WTC11 (cell line): ENCODE measurements at regions of chr22 and their contacts with region 1.

Region 1: GRCh38 chr22:24423519-24424000 is 3.8 kb upstream of the ADORA2A start:
- DNase-seq: peak; percentile 69
- ATAC-seq: peak; percentile 29
- H3K4me3 Mint-ChIP-seq: peak overlapping the region; percentile 61
- H3K27ac Mint-ChIP-seq: no peak overlapping the region
- H3K4me1 Mint-ChIP-seq: peaks cover 27% of the 10 kb centered on the region
- H3K27me3 Mint-ChIP-seq: peaks cover 20% of the 10 kb centered on the region
- CTCF ChIP-seq: peak; percentile 98

Region 2: GRCh38 chr22:24433813-24434470 is 10.4 kb after region 1 on chr22:
- CTCF ChIA-PET with region 1: interaction called, 51 read pairs
- POLR2A ChIA-PET with region 1: no interaction called
- DNase-seq: no peak
- ATAC-seq: no peak
- H3K4me3 Mint-ChIP-seq: no peak overlapping the region
- H3K27ac Mint-ChIP-seq: no peak overlapping the region
- H3K4me1 Mint-ChIP-seq: peaks cover 6% of the 10 kb centered on the region
- H3K27me3 Mint-ChIP-seq: no peaks in the 10 kb centered on the region
- CTCF ChIP-seq: no peak

Region 3: DNA sequence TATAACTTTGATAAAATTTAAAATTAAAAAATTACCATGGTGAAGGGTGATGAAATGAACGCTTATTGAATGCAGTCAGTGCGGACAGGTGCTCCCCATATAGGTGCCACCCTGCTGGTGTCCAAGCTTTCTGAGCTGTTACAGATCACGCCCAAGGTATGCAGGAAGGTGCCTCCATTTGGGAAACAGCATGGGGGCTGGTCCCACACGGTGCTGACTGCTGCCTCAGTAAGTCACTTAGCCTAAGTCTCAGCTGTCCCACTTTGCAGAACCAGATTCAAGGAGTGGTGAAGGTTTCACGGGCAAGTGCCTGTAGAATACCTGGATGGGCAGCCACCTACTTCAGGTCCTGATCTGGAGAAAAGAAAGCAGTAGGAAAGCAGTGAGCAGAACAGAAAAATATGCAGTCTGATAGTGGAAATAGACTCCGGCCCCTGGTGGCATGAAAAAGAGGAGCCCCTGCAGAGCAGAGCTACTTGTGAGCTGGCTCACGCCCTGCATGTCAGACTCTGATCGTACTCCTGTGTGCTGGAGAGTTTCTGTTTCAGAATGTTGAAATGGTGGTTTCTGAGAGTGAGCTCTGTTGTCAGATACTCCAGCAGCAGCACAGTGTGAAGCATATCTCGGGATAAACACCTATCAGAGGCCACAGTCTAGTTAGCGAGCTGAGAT is 37.0 kb after region 1 on chr22:
- CTCF ChIA-PET with region 1: interaction called, 12 read pairs
- POLR2A ChIA-PET with region 1: no interaction called
- DNase-seq: no peak
- ATAC-seq: peak; percentile 44
- H3K4me3 Mint-ChIP-seq: no peak overlapping the region
- H3K27ac Mint-ChIP-seq: peak overlapping the region; percentile 30; the same call in 1 of the 2 replicates
- H3K4me1 Mint-ChIP-seq: peaks cover 11% of the 10 kb centered on the region
- H3K27me3 Mint-ChIP-seq: no peaks in the 10 kb centered on the region
- CTCF ChIP-seq: no peak

Region 4: DNA sequence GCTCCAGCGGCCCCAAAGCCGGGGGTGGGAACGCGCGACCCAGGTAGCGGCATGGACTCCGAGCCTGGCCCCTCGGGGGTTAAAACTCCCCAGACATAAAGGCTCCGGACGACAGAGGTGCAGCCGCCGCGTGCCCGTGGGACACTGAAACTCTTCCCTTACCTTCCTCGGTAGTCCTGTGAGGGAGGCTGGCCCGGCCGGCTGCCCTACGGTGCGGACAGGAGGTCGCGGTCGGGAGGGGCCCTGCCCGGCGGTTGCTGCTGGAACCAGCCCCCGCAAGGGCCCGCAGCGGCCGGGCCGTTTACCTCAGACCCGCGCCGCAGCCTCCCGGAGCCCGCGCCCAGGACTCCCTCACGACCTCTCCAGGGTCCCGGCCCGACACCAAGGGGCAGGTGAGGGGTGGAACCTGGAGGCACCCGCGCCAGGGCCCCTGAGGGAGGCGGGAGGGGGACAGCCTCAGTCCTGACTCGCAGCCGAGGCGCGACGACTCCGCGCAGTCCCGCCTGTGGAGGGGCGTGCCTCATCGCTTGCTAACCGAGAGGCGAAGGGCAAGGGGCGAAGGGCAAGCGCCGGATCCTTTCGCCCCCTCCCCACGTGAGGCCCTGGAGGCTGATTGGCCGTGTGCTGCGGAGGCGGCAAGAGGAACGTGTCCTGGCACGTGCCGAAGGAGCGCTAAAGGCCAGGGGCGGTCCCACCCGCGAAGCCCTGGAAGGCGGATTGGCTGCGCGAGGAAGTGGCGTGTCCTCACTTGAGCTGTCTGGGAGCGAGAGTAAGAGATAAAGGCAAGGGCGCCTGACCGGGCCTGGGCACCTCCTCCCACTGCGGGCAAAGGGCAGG is 71.2 kb after region 1 on chr22 and contains the start of gene UPB1:
- CTCF ChIA-PET with region 1: interaction called, 271 read pairs
- POLR2A ChIA-PET with region 1: no interaction called
- DNase-seq: peak; percentile 50
- ATAC-seq: peak; percentile 69
- H3K4me3 Mint-ChIP-seq: peak within 1 kb of the TSS; percentile 58
- H3K27ac Mint-ChIP-seq: no peak within 1 kb of the TSS
- H3K4me1 Mint-ChIP-seq: peaks cover 3% of the 10 kb centered on the region; the same call in 1 of the 2 replicates
- H3K27me3 Mint-ChIP-seq: peaks cover 66% of the 10 kb centered on the region
- CTCF ChIP-seq: no peak
- total RNA-seq, gene UPB1: 0.09 to 0.18 TPM (median 0.09 TPM) in 3 replicates

Region 5: DNA sequence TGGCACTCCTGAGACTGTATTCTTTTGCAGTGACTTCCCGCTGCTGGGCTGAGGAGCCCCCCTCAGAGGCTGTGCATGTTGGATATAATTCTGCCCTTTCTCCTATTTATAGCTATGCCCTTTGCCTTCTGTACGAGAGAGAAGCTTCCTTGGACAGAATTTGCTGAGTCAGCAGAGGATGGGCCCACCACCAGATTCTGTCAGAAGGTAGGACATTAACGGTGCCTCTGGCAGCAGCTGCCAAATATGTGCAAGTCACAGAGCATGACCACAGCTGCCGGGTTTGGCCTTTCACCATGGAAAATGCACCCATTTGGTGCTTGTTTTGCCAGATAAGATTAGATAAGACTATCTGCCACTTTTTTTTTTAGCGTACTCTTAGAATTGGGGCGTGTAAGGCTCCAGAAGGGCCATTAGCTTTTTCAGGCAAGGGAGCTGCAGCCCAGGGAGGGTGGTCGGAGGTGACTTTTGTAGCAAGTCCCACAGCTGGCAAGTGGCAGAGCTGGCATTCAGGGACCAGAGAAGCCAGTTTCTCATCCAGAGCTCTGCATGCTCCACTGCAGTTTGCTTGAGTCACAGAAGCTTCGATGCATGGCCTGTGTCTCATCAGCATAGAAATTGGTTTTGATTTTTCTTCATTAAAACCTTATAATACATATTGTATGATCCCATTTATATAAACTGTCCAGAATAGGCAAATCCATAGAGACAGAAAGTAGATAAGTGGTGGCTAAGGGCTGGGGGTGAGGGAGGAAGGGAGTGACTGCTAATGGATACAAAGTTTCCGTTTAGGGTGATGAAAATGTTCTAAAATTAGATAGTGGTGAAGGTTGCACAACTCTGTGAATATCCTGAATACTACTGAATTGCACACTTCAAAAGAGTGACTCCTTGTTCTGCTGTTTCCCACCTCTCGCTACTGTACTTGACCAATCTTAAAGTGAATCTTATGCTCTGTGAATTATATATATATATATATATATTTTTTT is 87.4 kb after region 1 on chr22:
- CTCF ChIA-PET with region 1: interaction called, 271 read pairs
- POLR2A ChIA-PET with region 1: no interaction called
- DNase-seq: no peak
- ATAC-seq: no peak
- H3K4me3 Mint-ChIP-seq: no peak overlapping the region
- H3K27ac Mint-ChIP-seq: no peak overlapping the region
- H3K4me1 Mint-ChIP-seq: peaks cover 23% of the 10 kb centered on the region
- H3K27me3 Mint-ChIP-seq: peaks cover 2% of the 10 kb centered on the region; the same call in 1 of the 2 replicates
- CTCF ChIP-seq: no peak

Region 6: GRCh38 chr22:24525416-24526037 is 102.0 kb after region 1 on chr22:
- CTCF ChIA-PET with region 1: interaction called, 243 read pairs
- POLR2A ChIA-PET with region 1: interaction called, 5 read pairs
- DNase-seq: peak; percentile 84
- ATAC-seq: peak; percentile 80
- H3K4me3 Mint-ChIP-seq: no peak overlapping the region
- H3K27ac Mint-ChIP-seq: no peak overlapping the region
- H3K4me1 Mint-ChIP-seq: peaks cover 12% of the 10 kb centered on the region
- H3K27me3 Mint-ChIP-seq: no peaks in the 10 kb centered on the region; the same call in 1 of the 2 replicates
- CTCF ChIP-seq: peak; percentile 67; the same call in 1 of the 2 replicates